Endothelial cell of umbilical vein (primary cell): ENCODE measurements at regions of chr12 and their contacts with region 1.

Region 1: DNA sequence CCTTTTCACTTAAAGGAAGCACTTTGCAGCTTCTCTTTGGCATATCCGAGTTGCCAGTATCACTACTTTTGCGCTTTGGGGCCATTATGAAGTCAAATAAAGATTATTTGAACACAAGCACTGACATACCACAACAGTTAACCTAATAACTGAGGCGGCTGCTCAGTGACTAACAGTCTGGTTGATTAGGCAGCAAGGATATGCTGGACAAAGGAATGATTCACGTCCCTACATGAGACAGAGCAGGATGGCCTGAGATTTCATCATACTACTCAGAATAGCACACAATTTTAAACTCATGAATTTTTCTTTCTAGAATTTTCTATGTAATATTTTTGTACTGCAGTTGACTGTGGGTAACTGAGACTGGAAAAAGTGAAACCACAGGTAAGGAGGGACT is 56.9 kb upstream of the E2F7 start:
- DNase-seq: peak; percentile 88
- H3K4me3 ChIP-seq: no peak overlapping the region
- H3K27ac ChIP-seq: peak overlapping the region; percentile 96
- H3K4me1 ChIP-seq: peaks cover 42% of the 10 kb centered on the region
- H3K27me3 ChIP-seq: no peaks in the 10 kb centered on the region
- CTCF ChIP-seq: no peak
- POLR2A ChIP-seq: no peak

Region 2: GRCh38 chr12:76898442-76898841 is 223.8 kb before region 1 on chr12:
- CTCF ChIA-PET with region 1: no interaction called
- POLR2A ChIA-PET with region 1: no interaction called
- dilution Hi-C with region 1: no loop called
- intact Hi-C with region 1: no loop called
- DNase-seq: no peak
- H3K4me3 ChIP-seq: no peak overlapping the region
- H3K27ac ChIP-seq: no peak overlapping the region
- H3K4me1 ChIP-seq: no peaks in the 10 kb centered on the region
- H3K27me3 ChIP-seq: no peaks in the 10 kb centered on the region
- CTCF ChIP-seq: no peak
- POLR2A ChIP-seq: no peak

Region 3: DNA sequence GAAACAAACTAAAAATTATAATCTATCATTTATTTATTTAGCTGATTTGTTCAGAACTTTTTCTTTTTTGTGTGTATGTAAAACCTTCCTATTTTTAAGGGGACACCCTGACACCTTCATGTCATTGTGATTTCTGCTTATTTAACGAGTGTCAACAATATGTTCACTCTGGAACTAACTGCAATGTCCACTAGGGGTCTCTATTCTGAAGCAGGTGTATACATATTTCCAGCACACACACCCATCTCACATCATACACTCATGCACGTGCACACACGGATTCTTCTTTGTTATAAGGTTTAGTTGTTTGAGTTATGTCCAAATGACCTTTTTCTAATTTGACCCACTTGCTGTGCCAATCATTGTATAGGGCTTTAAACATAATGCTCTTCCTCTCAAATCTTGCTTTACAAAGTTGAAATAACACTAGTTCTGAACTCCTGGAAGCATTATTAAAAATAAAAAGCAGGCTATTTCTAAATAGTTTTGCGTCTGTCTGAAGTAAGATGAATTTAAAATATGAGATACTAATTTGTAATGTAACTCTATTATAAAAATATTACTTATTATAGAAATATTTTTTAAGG is 72.4 kb before region 1 on chr12:
- CTCF ChIA-PET with region 1: no interaction called
- POLR2A ChIA-PET with region 1: no interaction called
- dilution Hi-C with region 1: no loop called
- intact Hi-C with region 1: no loop called
- DNase-seq: peak; percentile 78
- H3K4me3 ChIP-seq: no peak overlapping the region
- H3K27ac ChIP-seq: no peak overlapping the region
- H3K4me1 ChIP-seq: no peaks in the 10 kb centered on the region
- H3K27me3 ChIP-seq: no peaks in the 10 kb centered on the region
- CTCF ChIP-seq: peak; percentile 60 to 64
- POLR2A ChIP-seq: no peak

Region 4: DNA sequence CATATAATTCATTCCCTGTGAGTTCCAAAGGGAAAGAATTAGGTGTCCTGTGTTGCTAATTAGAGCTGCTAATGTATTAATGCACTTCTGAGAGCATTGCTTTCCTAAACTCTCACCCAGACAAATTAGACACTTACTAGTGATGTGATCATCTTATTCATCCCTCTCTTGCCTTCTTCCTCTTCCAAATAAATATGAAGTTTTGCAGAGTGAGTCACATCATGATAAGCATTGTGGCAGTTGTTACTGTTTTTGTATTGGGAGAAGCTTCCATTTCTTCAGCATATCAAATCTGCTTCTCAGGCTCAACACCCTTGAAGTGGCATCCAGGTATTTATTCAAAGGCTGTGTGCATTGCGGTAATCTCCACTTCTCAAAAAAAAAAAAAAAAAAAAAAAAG is 19.5 kb before region 1 on chr12:
- CTCF ChIA-PET with region 1: interaction called, 4 read pairs
- POLR2A ChIA-PET with region 1: interaction called, 3 read pairs
- dilution Hi-C with region 1: no loop called
- intact Hi-C with region 1: loop called (anchors 1 kb)
- DNase-seq: peak; percentile 71
- H3K4me3 ChIP-seq: no peak overlapping the region
- H3K27ac ChIP-seq: peak overlapping the region; percentile 67
- H3K4me1 ChIP-seq: peaks cover 34% of the 10 kb centered on the region
- H3K27me3 ChIP-seq: no peaks in the 10 kb centered on the region
- CTCF ChIP-seq: no peak
- POLR2A ChIP-seq: no peak

Region 5: GRCh38 chr12:77213319-77213718 is 91.1 kb after region 1 on chr12:
- CTCF ChIA-PET with region 1: no interaction called
- POLR2A ChIA-PET with region 1: no interaction called
- dilution Hi-C with region 1: no loop called
- intact Hi-C with region 1: loop called (anchors 1 kb)
- DNase-seq: peak; percentile 98
- H3K4me3 ChIP-seq: no peak overlapping the region
- H3K27ac ChIP-seq: peak overlapping the region; percentile 28
- H3K4me1 ChIP-seq: peaks cover 15% of the 10 kb centered on the region
- H3K27me3 ChIP-seq: peaks cover 3% of the 10 kb centered on the region in 2 experiments
- CTCF ChIP-seq: peak in 1 of 2 donors; percentile 14
- POLR2A ChIP-seq: no peak

Region 6: GRCh38 chr12:77847060-77847541 is 724.9 kb after region 1 on chr12:
- CTCF ChIA-PET with region 1: no interaction called
- POLR2A ChIA-PET with region 1: no interaction called
- dilution Hi-C with region 1: no loop called
- intact Hi-C with region 1: loop called (anchors 5 kb)
- DNase-seq: peak; percentile 40
- H3K4me3 ChIP-seq: no peak overlapping the region
- H3K27ac ChIP-seq: peak overlapping the region; percentile 78
- H3K4me1 ChIP-seq: peaks cover 44% of the 10 kb centered on the region
- H3K27me3 ChIP-seq: no peaks in the 10 kb centered on the region
- CTCF ChIP-seq: no peak
- POLR2A ChIP-seq: no peak

Region 7: GRCh38 chr12:77940011-77940423 is 817.8 kb after region 1 on chr12:
- CTCF ChIA-PET with region 1: no interaction called
- POLR2A ChIA-PET with region 1: no interaction called
- dilution Hi-C with region 1: no loop called
- intact Hi-C with region 1: loop called (anchors 2 kb)
- DNase-seq: peak; percentile 84
- H3K4me3 ChIP-seq: peak overlapping the region in 2 of 3 experiments; percentile 70 to 90
- H3K27ac ChIP-seq: peak overlapping the region; percentile 95
- H3K4me1 ChIP-seq: peaks cover 39% of the 10 kb centered on the region
- H3K27me3 ChIP-seq: no peaks in the 10 kb centered on the region
- CTCF ChIP-seq: no peak
- POLR2A ChIP-seq: peak; percentile 57